ENCODE measurements at regions of chr6 and their contacts with region 1.

Region 1: DNA sequence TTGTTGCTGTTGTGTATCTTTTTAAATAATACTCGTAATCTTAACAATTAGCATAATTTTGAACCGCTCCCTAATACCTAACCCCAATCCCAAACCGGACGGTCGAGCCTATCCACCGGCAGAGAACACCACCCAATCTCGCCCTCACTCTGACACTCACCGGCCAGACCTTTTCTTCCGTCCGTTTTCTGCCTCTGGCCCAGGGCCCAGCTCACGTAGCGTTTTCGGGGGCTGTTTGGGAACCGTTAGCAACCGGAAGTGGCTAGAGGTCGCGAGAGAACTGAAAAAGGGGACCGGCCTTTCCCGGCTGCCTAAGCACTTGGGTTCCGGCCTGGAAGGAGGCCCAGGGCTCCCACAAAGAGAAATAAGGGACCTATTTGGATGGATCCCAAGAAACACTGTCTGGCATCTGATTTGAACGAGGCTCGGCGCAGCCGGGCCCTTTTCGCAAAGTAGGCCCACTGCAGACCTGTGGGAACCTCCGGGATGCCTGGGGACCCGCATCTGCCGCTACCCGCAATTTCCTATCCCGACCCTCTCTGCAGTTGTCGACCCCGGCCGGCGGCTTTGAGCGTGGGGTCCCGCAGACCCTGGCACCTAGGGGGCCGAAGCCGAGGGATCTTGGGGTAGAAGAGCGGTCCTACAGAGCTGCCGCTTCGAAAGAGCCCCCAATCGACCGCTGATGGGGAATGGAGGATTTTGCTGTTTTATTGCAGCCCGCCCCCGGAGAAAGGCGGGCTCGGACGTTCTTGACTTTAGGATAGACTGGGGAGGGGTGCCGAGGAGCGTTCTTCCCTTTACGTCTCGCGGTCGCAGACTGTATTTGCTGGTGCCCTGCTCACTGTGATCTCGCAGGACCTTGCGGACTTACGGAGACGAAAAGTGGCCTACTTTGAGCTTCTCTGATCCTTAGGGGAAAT is 4.8 kb upstream of the ZKSCAN8 start:
- DNase-seq: peak; percentile 71

Region 2: DNA sequence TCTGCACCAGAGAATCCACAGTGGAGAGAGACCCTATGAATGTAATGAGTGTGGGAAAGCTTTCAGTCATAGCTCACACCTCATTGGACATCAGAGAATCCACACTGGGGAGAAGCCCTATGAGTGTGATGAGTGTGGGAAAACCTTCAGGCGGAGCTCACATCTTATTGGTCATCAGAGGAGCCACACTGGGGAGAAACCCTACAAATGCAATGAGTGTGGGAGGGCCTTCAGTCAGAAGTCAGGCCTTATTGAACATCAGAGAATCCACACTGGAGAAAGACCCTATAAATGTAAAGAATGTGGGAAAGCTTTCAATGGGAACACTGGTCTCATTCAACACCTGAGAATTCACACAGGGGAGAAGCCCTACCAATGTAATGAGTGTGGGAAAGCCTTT is 16.7 kb after region 1 on chr6:
- CTCF ChIA-PET with region 1: no interaction called
- POLR2A ChIA-PET with region 1: interaction called, 30 read pairs
- DNase-seq: no peak

Region 3: DNA sequence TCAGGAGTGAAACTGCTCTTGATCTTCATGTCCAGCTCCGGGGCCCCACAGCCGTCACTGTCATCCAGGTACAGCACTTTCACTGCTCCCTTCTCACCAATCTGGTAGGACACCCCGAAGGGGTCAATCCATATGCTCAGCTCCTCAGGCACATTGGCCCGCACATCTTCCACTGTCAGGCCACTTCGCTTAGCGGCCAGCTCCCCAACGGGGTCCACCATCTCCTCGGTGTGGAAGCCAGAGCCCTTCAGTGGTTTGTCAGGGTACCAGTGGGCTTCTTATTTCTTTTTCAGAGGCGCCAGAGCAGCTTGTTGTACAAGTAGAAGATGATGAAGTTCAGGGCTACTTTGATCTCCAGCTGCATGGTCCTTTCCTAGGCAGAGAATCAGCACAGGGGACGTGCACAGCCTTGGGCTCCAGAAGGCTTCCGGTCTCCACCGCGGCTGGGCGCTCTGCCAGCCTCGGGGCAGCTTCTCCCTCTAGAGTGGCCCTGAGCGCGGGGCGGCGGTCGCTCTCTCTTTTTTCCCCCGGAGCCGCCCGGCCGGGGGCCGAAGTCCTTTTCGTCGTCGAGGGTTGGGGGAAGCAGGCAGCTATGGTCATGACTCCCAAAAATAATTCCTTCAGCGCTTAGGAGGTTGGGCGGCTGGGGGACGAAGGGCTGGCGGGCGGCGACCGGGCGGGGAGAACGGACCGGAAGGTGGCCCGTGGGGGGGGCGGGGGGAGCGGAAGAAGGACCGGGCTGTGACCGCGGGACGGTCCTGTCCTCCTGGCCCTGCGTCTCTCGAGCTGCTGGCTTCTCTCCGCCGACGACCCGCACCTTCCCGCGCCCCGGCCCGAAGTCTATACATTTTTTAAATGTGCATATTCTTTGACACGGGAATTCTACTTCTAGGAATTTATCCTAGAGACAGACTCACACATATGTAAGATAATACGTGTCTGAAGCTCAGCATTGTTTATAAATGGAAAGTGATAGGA is 81.7 kb after region 1 on chr6:
- CTCF ChIA-PET with region 1: no interaction called
- POLR2A ChIA-PET with region 1: interaction called, 14 read pairs
- DNase-seq: peak; percentile 67

Region 4: GRCh38 chr6:28266962-28267694 is 130.3 kb after region 1 on chr6 and contains the start of gene ZSCAN26:
- CTCF ChIA-PET with region 1: no interaction called
- POLR2A ChIA-PET with region 1: interaction called, 16 read pairs
- DNase-seq: peak; percentile 79

Region 5: GRCh38 chr6:28349892-28350737 is 213.3 kb after region 1 on chr6 and contains the start of gene ZKSCAN3:
- CTCF ChIA-PET with region 1: interaction called, 11 read pairs
- POLR2A ChIA-PET with region 1: interaction called, 18 read pairs
- DNase-seq: peak; percentile 81

Measured in HEK293T (cell line).